Heart right ventricle (tissue), 16 donors: ENCODE measurements at regions of chr3 and their contacts with region 1.

Region 1: DNA sequence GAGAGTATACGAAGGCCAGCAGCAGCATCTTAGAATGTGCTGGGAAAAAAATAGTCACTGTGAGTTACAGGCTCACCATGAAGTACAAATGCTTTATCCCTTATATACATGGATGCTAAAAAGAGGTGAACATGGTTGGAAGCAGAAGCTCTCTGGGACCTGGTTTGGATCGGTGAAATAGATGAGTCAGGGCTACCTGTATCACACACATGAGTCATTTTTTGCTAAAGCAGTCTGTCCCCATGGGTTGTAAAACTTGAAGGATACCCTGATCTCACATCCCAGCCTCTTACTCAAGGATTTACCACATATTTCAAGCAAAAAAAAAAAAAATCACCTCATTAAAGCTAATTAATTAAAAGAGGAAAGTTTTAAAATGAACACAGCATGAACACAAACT is 6.9 kb upstream of the SERPINI2 start:
- DNase-seq: no peak
- ATAC-seq: no peak
- H3K4me3 ChIP-seq: no peak overlapping the region
- H3K27ac ChIP-seq: no peak overlapping the region
- H3K4me1 ChIP-seq: no peaks in the 10 kb centered on the region
- H3K27me3 ChIP-seq: no peaks in the 10 kb centered on the region
- CTCF ChIP-seq: no peak

Region 2: DNA sequence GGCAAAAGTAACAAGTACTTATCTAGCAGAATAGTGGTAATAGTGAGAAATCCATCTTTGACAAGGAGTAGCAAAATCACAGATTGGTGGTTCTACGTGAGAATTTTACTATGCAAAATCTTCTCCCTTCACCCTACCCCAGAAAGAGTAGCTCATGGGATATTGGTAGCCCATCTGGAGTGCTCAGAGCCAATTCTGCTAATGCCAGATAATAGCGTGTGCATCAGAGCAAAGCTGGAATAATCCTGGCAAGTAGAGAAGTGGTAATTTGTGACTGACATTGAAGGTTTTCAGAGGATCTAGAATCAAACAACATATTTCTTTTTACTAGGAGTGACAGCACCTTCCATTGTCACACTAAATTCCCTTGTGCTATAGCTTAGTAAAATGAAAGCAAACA is 293.5 kb before region 1 on chr3:
- intact Hi-C with region 1: no loop called
- DNase-seq: no peak
- ATAC-seq: no peak
- H3K4me3 ChIP-seq: peak overlapping the region in 1 of 10 donors; percentile 13
- H3K27ac ChIP-seq: no peak overlapping the region
- H3K4me1 ChIP-seq: no peaks in the 10 kb centered on the region
- H3K27me3 ChIP-seq: no peaks in the 10 kb centered on the region
- CTCF ChIP-seq: no peak

Region 3: DNA sequence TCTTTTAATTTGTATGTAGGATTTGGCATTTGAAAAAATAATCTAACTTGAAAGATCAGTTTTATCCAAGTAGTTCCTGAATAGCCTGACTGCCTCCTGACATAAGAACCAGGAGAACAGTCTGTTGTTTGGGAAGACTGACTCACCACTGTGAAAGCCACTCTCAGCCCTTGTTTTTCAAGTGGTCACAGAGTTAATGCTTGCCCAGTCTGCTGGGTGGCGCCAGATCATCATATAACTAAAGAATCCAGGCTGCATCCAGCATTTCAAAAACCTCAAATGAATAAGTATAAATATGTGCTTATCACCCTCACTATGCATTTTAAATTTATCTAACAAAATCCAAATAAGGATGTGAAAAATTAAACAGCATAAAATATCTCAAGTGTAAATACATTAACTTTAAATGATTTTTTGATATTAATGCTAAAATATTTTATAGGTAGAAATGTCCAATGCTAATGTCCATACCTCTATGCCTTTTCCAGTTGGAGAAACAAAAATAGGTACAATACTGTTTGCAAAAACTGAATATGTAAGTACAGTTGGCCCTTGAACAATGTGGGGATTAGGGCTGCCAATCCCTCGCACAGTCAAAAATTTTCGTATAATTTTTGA is 73.8 kb before region 1 on chr3:
- intact Hi-C with region 1: no loop called
- DNase-seq: peak in 1 of 2 donors; percentile 21
- ATAC-seq: peak in 7 of 8 donors; percentile 43 to 96 (median 83)
- H3K4me3 ChIP-seq: no peak overlapping the region
- H3K27ac ChIP-seq: no peak overlapping the region
- H3K4me1 ChIP-seq: no peaks in the 10 kb centered on the region
- H3K27me3 ChIP-seq: no peaks in the 10 kb centered on the region
- CTCF ChIP-seq: peak in 7 of 9 donors; percentile 36 to 63 (median 52)

Region 4: GRCh38 chr3:167456157-167456799 is 24.5 kb before region 1 on chr3:
- intact Hi-C with region 1: loop called in 1 of 10 experiments (anchors 1 kb)
- DNase-seq: no peak
- ATAC-seq: no peak
- H3K4me3 ChIP-seq: no peak overlapping the region
- H3K27ac ChIP-seq: no peak overlapping the region
- H3K4me1 ChIP-seq: no peaks in the 10 kb centered on the region
- H3K27me3 ChIP-seq: no peaks in the 10 kb centered on the region
- CTCF ChIP-seq: no peak

Region 5: GRCh38 chr3:167773584-167773983 is 292.8 kb after region 1 on chr3:
- intact Hi-C with region 1: no loop called
- DNase-seq: no peak
- ATAC-seq: no peak
- H3K4me3 ChIP-seq: no peak overlapping the region
- H3K27ac ChIP-seq: no peak overlapping the region
- H3K4me1 ChIP-seq: peaks cover 0 to 8% (median 0%) of the 10 kb centered on the region in 9 donors
- H3K27me3 ChIP-seq: no peaks in the 10 kb centered on the region
- CTCF ChIP-seq: no peak

Region 6: DNA sequence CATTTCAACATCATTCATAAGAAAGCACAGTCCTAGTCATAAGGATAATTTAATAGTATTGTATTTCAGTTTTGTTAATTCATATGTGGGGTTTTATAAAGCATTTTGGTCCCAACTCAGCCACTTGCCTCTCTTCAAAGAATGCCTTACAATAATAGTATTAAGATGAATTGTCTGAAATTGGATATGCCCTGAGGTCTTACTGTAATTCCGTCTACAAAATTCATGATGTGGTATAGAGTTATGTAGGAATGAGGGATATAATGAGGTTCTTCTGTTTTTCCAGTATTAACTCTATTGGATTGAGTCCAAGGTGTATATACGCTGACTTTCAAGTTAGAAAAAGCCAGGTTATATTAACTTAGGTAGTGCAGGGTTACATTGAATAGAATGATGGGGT is 437.9 kb after region 1 on chr3:
- intact Hi-C with region 1: no loop called
- DNase-seq: no peak
- ATAC-seq: no peak
- H3K4me3 ChIP-seq: no peak overlapping the region
- H3K27ac ChIP-seq: no peak overlapping the region
- H3K4me1 ChIP-seq: no peaks in the 10 kb centered on the region
- H3K27me3 ChIP-seq: no peaks in the 10 kb centered on the region
- CTCF ChIP-seq: no peak